ENCODE measurements at regions of chr4 and their contacts with region 1.

Region 1: DNA sequence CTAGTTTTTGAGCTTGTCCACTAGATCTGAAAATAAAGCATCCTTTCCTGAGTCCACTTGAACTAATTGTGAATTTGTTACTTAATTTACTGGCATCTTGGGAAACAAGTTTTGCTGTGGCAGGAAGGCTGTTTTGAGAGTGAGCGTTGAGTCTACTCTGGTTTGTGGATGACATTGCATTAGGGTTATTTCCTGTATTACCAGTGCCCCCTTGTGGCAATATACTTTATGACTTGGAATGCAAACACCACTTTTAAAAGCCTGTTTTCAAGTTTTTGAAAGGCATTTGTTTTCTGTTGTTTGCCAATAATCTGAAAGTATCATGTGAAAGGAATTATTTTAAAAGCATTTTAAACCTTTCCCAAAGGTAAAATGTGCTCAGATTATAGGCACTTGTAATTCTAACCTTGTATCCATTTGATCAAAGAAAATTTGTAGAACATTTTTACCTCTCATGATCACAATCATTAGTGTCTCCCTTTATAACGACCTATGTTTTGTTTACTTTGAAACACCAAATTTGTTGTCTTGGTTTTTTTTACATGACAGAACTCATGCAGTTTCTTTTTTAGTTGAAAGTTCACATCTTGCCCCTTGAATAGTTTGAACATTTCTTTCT is 18.0 kb upstream of the CYP2U1 start:
- DNase-seq: no peak
- ATAC-seq: peak; percentile 78 to 88

Region 2: GRCh38 chr4:107579099-107579498 is 334.3 kb before region 1 on chr4:
- intact Hi-C with region 1: no loop called
- DNase-seq: no peak
- ATAC-seq: no peak

Region 3: GRCh38 chr4:107757864-107758476 is 155.4 kb before region 1 on chr4:
- intact Hi-C with region 1: loop called (anchors 1 to 5 kb)
- DNase-seq: no peak
- ATAC-seq: no peak

Region 4: DNA sequence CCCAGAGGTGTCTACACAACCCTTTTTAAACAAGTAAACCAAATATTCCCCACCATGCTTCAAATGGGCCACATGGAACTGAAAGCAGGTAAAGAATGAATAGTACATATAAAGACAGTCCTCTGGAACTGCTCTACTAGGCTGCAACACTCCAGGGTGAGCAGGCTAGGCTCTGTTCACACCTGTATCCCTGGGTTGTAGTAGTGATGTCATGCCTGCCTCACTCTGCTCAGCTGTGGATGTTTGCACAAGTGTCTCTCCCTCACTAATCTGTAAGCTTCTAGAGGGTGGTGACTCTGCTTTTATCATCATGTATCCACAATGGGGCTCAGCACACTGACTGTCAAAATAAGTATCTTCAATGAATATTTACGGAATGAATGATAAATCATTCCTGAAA is 234.9 kb after region 1 on chr4:
- intact Hi-C with region 1: no loop called
- DNase-seq: no peak
- ATAC-seq: no peak

Region 5: DNA sequence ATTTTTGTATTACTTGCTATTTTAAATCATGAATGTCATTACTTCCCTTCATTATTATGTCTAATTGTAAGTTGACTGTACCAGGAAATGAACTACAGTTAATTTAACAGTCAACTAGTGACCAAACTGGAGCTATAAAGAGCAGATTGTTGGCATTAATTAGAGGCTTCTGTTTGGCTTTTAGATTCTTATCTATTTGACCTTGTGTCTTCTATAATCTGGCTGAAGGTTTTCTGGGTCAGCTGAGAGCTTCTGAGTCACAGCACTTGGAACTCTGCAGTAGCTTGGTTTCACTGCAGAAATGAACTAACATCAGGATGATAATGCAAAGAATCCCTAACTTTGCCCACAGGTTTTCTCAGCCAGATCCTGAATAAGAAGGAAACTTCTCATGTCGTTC is 424.5 kb after region 1 on chr4:
- intact Hi-C with region 1: no loop called
- DNase-seq: no peak
- ATAC-seq: no peak